PC-9 (cell line): ENCODE measurements at regions of chr11 and their contacts with region 1.

Region 1: DNA sequence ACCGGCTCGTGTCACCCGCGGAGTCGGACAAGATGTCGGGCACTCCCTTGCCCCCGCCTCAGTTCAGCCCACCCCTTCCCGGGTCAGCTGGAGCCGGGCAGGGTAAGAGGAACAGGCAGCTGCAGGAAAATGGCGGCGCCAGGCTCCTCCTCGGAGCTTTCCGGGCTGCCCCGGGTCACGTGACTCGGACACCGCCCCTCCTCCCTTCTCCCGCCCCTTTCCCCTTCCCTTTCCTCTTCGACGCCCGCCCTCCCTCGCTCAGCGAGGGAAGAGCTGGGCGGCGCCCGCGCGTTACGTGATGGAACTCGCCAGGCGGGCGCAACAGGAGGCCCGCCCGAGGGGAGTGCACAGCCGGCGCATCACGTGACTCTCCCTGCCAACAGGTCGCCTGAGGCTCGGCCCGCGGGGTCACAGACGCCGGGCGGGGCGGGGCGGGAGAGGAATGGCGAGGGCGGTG is at the start of gene PICALM:
- DNase-seq: peak; percentile 97
- H3K4me3 ChIP-seq: peak within 1 kb of the TSS; percentile 85
- H3K27ac ChIP-seq: peak within 1 kb of the TSS; percentile 99
- H3K4me1 ChIP-seq: peaks cover 42% of the 10 kb centered on the region
- H3K27me3 ChIP-seq: no peaks in the 10 kb centered on the region
- CTCF ChIP-seq: no peak
- total RNA-seq, gene PICALM: 92.3 and 116 TPM in 2 replicates

Region 2: GRCh38 chr11:86041975-86042378 is 27.0 kb before region 1 on chr11:
- CTCF ChIA-PET with region 1: interaction called, 7 read pairs
- POLR2A ChIA-PET with region 1: no interaction called
- intact Hi-C with region 1: loop called (anchors 1 kb)
- DNase-seq: peak; percentile 55 to 79
- H3K4me3 ChIP-seq: no peak overlapping the region
- H3K27ac ChIP-seq: no peak overlapping the region
- H3K4me1 ChIP-seq: peaks cover 34% of the 10 kb centered on the region
- H3K27me3 ChIP-seq: no peaks in the 10 kb centered on the region
- CTCF ChIP-seq: peak; percentile 100

Region 3: DNA sequence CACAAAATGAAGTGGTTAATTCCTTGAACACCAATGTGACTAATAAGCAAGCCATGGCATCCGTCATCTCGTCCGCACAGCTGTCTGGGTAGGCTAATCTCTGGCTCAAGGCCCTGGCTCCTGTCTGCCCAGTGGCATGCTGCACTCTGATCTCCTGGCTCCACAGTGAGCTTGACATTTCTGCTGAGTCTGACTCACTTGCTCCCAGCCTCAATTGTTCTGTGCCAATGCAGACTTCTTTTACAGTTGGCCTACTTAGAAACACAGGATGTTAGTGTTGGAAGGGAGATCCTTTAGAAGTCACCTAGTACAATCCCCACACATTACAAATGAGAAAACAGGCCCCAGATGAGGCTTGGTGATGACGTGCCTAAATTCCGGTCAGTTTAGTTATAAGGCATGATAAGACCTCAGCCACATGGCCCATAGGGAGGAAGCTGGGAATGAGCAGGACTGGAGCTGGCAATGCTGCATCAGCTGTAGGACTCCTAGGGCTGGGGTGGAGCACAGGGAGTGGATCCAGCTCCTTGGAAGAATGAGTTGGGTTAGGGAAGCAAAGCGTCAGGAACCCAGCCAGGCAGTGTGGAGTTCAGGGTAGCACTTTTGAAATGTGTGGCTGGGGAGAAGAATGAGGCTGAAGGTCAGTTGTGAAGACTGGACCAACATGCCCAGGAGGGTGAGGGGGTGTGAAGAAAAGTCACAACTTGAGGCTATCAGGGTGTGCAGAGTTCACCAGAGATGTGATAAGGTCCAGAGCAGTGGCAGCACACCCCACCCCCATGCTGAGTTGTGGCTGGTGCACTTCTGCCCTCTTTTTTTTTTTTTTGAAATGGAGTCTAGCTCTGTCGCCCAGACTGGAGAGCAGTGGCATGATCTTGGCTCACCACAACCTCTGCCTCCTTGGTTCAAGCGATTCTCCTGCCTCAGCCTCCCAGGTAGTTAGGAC is 105.4 kb after region 1 on chr11:
- CTCF ChIA-PET with region 1: interaction called, 6 read pairs
- POLR2A ChIA-PET with region 1: interaction called, 6 read pairs
- intact Hi-C with region 1: loop called (anchors 1 kb)
- DNase-seq: peak; percentile 80 to 98
- H3K4me3 ChIP-seq: no peak overlapping the region
- H3K27ac ChIP-seq: peak overlapping the region; percentile 79
- H3K4me1 ChIP-seq: peaks cover 62% of the 10 kb centered on the region
- H3K27me3 ChIP-seq: no peaks in the 10 kb centered on the region
- CTCF ChIP-seq: no peak

Region 4: DNA sequence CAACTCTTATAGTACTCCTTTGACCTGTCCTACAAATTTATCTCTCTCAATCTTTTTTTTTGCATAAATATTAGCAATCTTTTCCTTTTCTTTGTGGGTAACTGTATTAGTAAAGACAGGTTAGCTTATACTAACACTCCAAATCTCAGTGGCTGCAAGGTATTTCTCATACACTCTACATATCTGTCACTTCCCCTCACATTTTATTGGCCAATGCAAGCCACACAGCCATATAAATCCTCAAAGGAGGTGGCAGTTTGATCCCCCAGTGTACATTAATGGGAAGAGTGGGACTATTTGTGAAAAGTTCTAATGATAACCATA is 133.0 kb after region 1 on chr11:
- CTCF ChIA-PET with region 1: interaction called, 3 read pairs
- POLR2A ChIA-PET with region 1: interaction called, 19 read pairs
- intact Hi-C with region 1: no loop called
- DNase-seq: no peak
- H3K4me3 ChIP-seq: peak overlapping the region; percentile 39; the same call in 1 of the 2 replicates
- H3K27ac ChIP-seq: no peak overlapping the region
- H3K4me1 ChIP-seq: no peaks in the 10 kb centered on the region
- H3K27me3 ChIP-seq: no peaks in the 10 kb centered on the region
- CTCF ChIP-seq: no peak

Region 5: GRCh38 chr11:87037450-87038234 is 968.7 kb after region 1 on chr11 and contains the start of gene TMEM135:
- CTCF ChIA-PET with region 1: no interaction called
- POLR2A ChIA-PET with region 1: interaction called, 14 read pairs
- intact Hi-C with region 1: no loop called
- DNase-seq: peak; percentile 95 to 96
- H3K4me3 ChIP-seq: peak within 1 kb of the TSS; percentile 98
- H3K27ac ChIP-seq: peak within 1 kb of the TSS; percentile 81
- H3K4me1 ChIP-seq: peaks cover 48% of the 10 kb centered on the region
- H3K27me3 ChIP-seq: no peaks in the 10 kb centered on the region
- CTCF ChIP-seq: no peak
- total RNA-seq, gene TMEM135: 15.0 and 42.0 TPM in 2 replicates